Right cardiac atrium (tissue), 5 donors: ENCODE measurements at regions of chr3 and their contacts with region 1.

Region 1: DNA sequence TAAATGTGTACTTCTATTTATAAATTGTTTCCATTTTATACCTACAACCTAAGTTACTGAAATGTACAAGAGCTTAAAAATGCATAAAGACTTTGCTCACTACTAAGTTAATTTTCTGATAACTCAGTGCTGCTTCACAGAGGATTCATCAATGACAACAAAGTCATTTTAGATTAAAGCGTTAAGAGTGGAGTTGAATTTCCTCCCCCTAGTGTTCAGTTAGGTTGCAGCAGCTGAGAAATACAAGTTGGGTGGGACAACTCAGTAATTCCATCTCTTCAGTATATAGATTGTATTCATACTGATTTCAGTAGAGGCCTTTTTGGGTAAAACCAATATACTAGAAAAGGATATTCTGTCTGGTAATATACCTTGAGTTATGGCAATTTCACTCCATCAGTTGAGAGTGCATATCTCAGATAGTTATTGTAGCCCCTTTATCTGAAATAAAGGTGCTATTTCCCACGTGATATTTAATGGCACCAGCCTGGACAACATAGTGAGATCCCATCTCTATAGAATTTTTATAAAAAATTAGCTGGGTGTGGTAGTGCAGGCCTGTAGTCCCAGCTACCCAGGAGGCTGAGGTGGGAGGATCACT is 6.9 kb upstream of the RPL35A start:
- DNase-seq: no peak
- ATAC-seq: peak in 1 of 2 donors; percentile 41
- H3K4me3 ChIP-seq: no peak overlapping the region
- H3K27ac ChIP-seq: no peak overlapping the region
- H3K4me1 ChIP-seq: no peaks in the 10 kb centered on the region
- H3K27me3 ChIP-seq: no peaks in the 10 kb centered on the region

Region 2: DNA sequence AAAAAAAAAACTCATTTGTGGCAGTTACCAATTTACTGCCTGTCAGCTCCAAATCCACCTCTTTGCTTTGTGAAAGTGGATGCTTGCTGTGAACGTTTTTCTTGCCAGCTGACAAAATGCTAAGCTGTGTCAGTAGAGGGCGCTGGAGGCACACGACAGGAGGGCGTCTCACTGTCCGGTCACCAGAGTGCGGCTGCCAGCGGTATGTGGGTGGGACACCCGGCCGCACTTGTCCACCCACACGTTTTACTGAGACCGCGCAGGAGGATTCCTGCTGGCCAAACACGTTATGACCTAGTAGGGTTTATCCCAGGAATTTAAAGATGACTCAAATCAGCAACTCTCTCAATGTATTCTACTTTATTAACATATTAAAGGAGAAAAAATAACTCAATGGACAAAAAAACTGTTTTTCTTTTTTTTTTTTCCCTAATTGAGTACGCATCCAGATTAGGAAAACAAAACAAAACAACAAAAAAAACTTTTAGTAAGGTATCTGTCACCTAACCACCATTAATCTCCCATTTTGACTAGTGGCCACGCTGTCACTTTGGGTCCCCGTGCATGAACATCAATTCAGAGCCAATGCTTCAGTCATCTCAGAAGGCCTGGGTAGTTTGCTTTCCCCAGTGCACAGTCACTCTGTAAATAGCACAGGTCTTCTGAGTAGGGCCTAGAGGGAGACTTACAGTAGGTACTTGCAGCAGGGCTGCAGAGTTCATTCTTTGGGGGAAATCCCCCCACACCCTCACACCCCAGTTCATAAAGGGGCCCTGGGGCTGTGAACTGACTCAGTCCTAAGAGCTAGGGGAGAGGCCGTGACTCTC is 36.8 kb before region 1 on chr3:
- intact Hi-C with region 1: loop called in 1 of 4 experiments (anchors 5 kb)
- DNase-seq: peak; percentile 92 to 95 (median 94)
- ATAC-seq: peak; percentile 98 to 99
- H3K4me3 ChIP-seq: no peak overlapping the region
- H3K27ac ChIP-seq: no peak overlapping the region
- H3K4me1 ChIP-seq: no peaks in the 10 kb centered on the region
- H3K27me3 ChIP-seq: no peaks in the 10 kb centered on the region